ENCODE measurements at regions of chr2 and their contacts with region 1.

Region 1: GRCh38 chr2:227406177-227407031 is 18.7 kb upstream of the SCYGR1 start:
- DNase-seq: no peak
- ATAC-seq: peak; percentile 85

Region 2: GRCh38 chr2:226325526-226325925 is 1080.9 kb before region 1 on chr2:
- intact Hi-C with region 1: no loop called
- DNase-seq: no peak
- ATAC-seq: no peak

Region 3: DNA sequence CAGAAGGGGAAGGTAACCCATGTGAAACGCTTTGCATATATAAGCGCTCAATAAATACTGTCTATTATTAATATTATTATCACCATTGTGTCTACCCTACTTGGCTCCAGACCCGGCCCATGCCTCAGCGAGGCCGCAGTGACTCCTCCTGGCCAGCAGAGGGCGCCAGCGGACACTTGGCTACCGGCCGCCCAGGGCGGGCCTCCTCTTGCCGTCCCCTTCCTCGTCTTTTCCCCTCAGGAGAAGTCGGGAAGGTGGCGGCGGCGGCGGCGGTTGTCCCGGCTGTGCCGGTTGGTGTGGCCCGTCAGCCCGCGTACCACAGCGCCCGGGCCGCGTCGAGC is 65.5 kb after region 1 on chr2 and contains the start of gene AGFG1:
- intact Hi-C with region 1: loop called (anchors 2 kb)
- DNase-seq: peak; percentile 94
- ATAC-seq: peak; percentile 87
- total RNA-seq, gene AGFG1: 57.8 TPM

Region 4: DNA sequence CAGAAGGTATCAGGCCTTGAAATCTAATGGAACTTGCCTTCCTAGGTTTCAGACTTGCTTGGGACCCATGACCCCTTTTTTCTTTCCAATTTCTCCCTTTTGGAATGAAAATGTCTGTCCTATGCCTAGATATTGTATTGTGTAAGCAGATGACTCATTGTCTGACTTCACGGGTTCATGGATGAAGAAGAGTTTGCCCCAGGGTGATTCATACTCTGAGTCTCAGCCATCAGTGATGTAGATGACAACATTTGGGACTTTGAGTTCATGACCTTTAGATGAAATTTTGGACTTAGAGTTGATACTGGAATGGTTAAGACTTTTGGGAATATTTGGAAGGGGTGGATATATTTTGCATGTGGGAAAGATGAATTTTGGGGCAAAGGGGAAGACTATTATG is 249.1 kb after region 1 on chr2:
- intact Hi-C with region 1: loop called (anchors 5 kb)
- DNase-seq: no peak
- ATAC-seq: peak; percentile 88